PC-3 (cell line): ENCODE measurements at regions of chr2 and their contacts with region 1.

Region 1: GRCh38 chr2:102615622-102616436 is 3.5 kb upstream of the SLC9A2 start:
- DNase-seq: peak; percentile 77
- ATAC-seq: peak; percentile 80
- H3K4me3 ChIP-seq: no peak overlapping the region
- H3K27ac ChIP-seq: no peak overlapping the region
- H3K4me1 ChIP-seq: peaks cover 5% of the 10 kb centered on the region; the same call in 1 of the 2 replicates
- H3K27me3 ChIP-seq: 0 out of 2 replicates have a peak, but pooled peaks cover 10% of the 10 kb centered on the region
- CTCF ChIP-seq: peak; percentile 90

Region 2: GRCh38 chr2:102551329-102552096 is 64.3 kb before region 1 on chr2:
- CTCF ChIA-PET with region 1: no interaction called
- POLR2A ChIA-PET with region 1: no interaction called
- intact Hi-C with region 1: no loop called
- DNase-seq: no peak
- ATAC-seq: no peak
- H3K4me3 ChIP-seq: no peak overlapping the region
- H3K27ac ChIP-seq: no peak overlapping the region
- H3K4me1 ChIP-seq: no peaks in the 10 kb centered on the region
- H3K27me3 ChIP-seq: no peaks in the 10 kb centered on the region
- CTCF ChIP-seq: no peak

Region 3: GRCh38 chr2:102703748-102704147 is 87.9 kb after region 1 on chr2:
- CTCF ChIA-PET with region 1: interaction called, 12 read pairs
- POLR2A ChIA-PET with region 1: no interaction called
- intact Hi-C with region 1: loop called (anchors 2 kb)
- DNase-seq: peak; percentile 62
- ATAC-seq: peak; percentile 82
- H3K4me3 ChIP-seq: no peak overlapping the region
- H3K27ac ChIP-seq: no peak overlapping the region
- H3K4me1 ChIP-seq: peaks cover 5% of the 10 kb centered on the region
- H3K27me3 ChIP-seq: no peaks in the 10 kb centered on the region
- CTCF ChIP-seq: peak; percentile 82

Region 4: GRCh38 chr2:102891296-102891695 is 275.5 kb after region 1 on chr2:
- CTCF ChIA-PET with region 1: no interaction called
- POLR2A ChIA-PET with region 1: no interaction called
- intact Hi-C with region 1: no loop called
- DNase-seq: no peak
- ATAC-seq: no peak
- H3K4me3 ChIP-seq: no peak overlapping the region
- H3K27ac ChIP-seq: no peak overlapping the region
- H3K4me1 ChIP-seq: no peaks in the 10 kb centered on the region
- H3K27me3 ChIP-seq: peaks cover 64% of the 10 kb centered on the region
- CTCF ChIP-seq: no peak